ENCODE measurements at regions of chr2 and their contacts with region 1.

Region 1: GRCh38 chr2:235135990-235136561 is 184.3 kb downstream of the SH3BP4 start:
- DNase-seq: peak; percentile 77 to 79
- H3K4me3 ChIP-seq: no peak overlapping the region
- H3K4me3 Mint-ChIP-seq: no peak overlapping the region
- H3K27ac Mint-ChIP-seq: no peak overlapping the region
- H3K4me1 ChIP-seq: no peaks in the 10 kb centered on the region
- H3K4me1 Mint-ChIP-seq: peaks cover 3% of the 10 kb centered on the region
- H3K27me3 ChIP-seq: no peaks in the 10 kb centered on the region
- H3K27me3 Mint-ChIP-seq: no peaks in the 10 kb centered on the region
- CTCF ChIP-seq: peak; percentile 69 to 75

Region 2: DNA sequence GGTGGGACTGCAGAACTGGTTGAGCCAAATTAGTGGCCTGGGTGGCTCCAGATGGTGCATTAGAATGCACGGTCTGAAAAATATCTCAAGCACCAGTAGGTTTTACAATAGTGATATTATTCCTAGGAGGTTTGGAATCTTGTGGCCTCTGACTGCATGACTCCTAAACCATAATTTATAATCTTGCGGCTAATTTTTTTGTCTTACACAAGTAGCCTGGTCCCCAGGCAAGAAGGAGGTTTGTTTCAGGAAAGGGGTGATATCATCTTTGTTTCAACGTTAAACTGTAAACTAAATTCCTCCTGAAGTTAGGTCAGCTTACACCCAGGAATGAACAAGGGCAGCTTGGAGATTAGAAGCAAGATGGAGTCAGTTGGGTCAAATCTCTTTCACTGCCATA is 540.2 kb before region 1 on chr2:
- CTCF ChIA-PET with region 1: no interaction called
- POLR2A ChIA-PET with region 1: no interaction called
- intact Hi-C with region 1: no loop called
- DNase-seq: no peak
- H3K4me3 ChIP-seq: no peak overlapping the region
- H3K4me3 Mint-ChIP-seq: no peak overlapping the region
- H3K27ac Mint-ChIP-seq: no peak overlapping the region
- H3K4me1 ChIP-seq: no peaks in the 10 kb centered on the region
- H3K4me1 Mint-ChIP-seq: no peaks in the 10 kb centered on the region
- H3K27me3 ChIP-seq: no peaks in the 10 kb centered on the region
- H3K27me3 Mint-ChIP-seq: no peaks in the 10 kb centered on the region
- CTCF ChIP-seq: no peak

Region 3: GRCh38 chr2:235170536-235171521 is 34.8 kb after region 1 on chr2:
- CTCF ChIA-PET with region 1: interaction called, 4 read pairs
- POLR2A ChIA-PET with region 1: no interaction called
- intact Hi-C with region 1: loop called (anchors 2 kb)
- DNase-seq: peak; percentile 63 to 73
- H3K4me3 ChIP-seq: no peak overlapping the region
- H3K4me3 Mint-ChIP-seq: no peak overlapping the region
- H3K27ac Mint-ChIP-seq: peak overlapping the region; percentile 78
- H3K4me1 ChIP-seq: peaks cover 12% of the 10 kb centered on the region; the same call in 1 of the 2 replicates
- H3K4me1 Mint-ChIP-seq: peaks cover 9% of the 10 kb centered on the region
- H3K27me3 ChIP-seq: no peaks in the 10 kb centered on the region
- H3K27me3 Mint-ChIP-seq: no peaks in the 10 kb centered on the region
- CTCF ChIP-seq: peak in 1 of 2 experiments; percentile 42

Region 4: GRCh38 chr2:235263205-235264122 is 127.4 kb after region 1 on chr2:
- CTCF ChIA-PET with region 1: no interaction called
- POLR2A ChIA-PET with region 1: no interaction called
- intact Hi-C with region 1: loop called (anchors 2 kb)
- DNase-seq: peak; percentile 62 to 79
- H3K4me3 ChIP-seq: peak overlapping the region; percentile 31
- H3K4me3 Mint-ChIP-seq: peak overlapping the region; percentile 83
- H3K27ac Mint-ChIP-seq: peak overlapping the region; percentile 92
- H3K4me1 ChIP-seq: peaks cover 10% of the 10 kb centered on the region
- H3K4me1 Mint-ChIP-seq: peaks cover 5% of the 10 kb centered on the region
- H3K27me3 ChIP-seq: no peaks in the 10 kb centered on the region
- H3K27me3 Mint-ChIP-seq: no peaks in the 10 kb centered on the region
- CTCF ChIP-seq: no peak

Region 5: GRCh38 chr2:235551965-235552364 is 415.9 kb after region 1 on chr2:
- CTCF ChIA-PET with region 1: interaction called, 4 read pairs
- POLR2A ChIA-PET with region 1: no interaction called
- intact Hi-C with region 1: loop called (anchors 5 kb)
- DNase-seq: peak; percentile 65
- H3K4me3 ChIP-seq: no peak overlapping the region
- H3K4me3 Mint-ChIP-seq: no peak overlapping the region
- H3K27ac Mint-ChIP-seq: peak overlapping the region; percentile 45
- H3K4me1 ChIP-seq: no peaks in the 10 kb centered on the region
- H3K4me1 Mint-ChIP-seq: no peaks in the 10 kb centered on the region
- H3K27me3 ChIP-seq: no peaks in the 10 kb centered on the region
- H3K27me3 Mint-ChIP-seq: no peaks in the 10 kb centered on the region
- CTCF ChIP-seq: peak; percentile 40 to 75

Region 6: GRCh38 chr2:235595422-235596010 is 459.4 kb after region 1 on chr2:
- CTCF ChIA-PET with region 1: interaction called, 4 read pairs
- POLR2A ChIA-PET with region 1: no interaction called
- intact Hi-C with region 1: loop called (anchors 1 kb)
- DNase-seq: peak; percentile 45 to 65
- H3K4me3 ChIP-seq: no peak overlapping the region
- H3K4me3 Mint-ChIP-seq: no peak overlapping the region
- H3K27ac Mint-ChIP-seq: no peak overlapping the region
- H3K4me1 ChIP-seq: no peaks in the 10 kb centered on the region
- H3K4me1 Mint-ChIP-seq: peaks cover 6% of the 10 kb centered on the region
- H3K27me3 ChIP-seq: no peaks in the 10 kb centered on the region
- H3K27me3 Mint-ChIP-seq: no peaks in the 10 kb centered on the region
- CTCF ChIP-seq: peak; percentile 64 to 72

Region 7: GRCh38 chr2:235746257-235747084 is 610.4 kb after region 1 on chr2:
- CTCF ChIA-PET with region 1: interaction called, 8 read pairs
- POLR2A ChIA-PET with region 1: no interaction called
- intact Hi-C with region 1: loop called (anchors 10 kb)
- DNase-seq: peak; percentile 65 to 69
- H3K4me3 ChIP-seq: no peak overlapping the region
- H3K4me3 Mint-ChIP-seq: no peak overlapping the region
- H3K27ac Mint-ChIP-seq: no peak overlapping the region
- H3K4me1 ChIP-seq: no peaks in the 10 kb centered on the region
- H3K4me1 Mint-ChIP-seq: peaks cover 5% of the 10 kb centered on the region
- H3K27me3 ChIP-seq: no peaks in the 10 kb centered on the region
- H3K27me3 Mint-ChIP-seq: no peaks in the 10 kb centered on the region
- CTCF ChIP-seq: peak; percentile 58 to 63